ENCODE measurements at regions of chr6 and their contacts with region 1.

Region 1: DNA sequence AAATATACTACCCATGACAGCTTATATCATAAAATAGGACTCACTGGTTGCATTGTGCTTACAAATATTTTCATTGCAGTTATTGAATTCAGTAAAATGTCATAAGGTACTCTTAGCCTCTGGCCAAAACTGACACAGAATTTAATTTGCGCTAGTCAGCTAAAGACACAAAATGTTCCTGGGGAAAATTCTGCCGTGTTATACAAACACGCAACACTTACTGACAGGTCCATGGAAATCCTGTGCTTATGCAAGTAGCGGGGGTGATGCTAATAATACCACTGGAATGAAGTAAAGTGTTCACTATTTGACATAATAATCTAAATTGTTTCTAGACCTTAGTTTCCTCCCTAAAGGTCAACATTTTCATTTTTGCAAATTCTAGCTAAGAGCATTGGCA is 354.4 kb upstream of the RSPO3 start:
- DNase-seq: no peak
- H3K4me3 ChIP-seq: no peak overlapping the region
- H3K27ac ChIP-seq: no peak overlapping the region
- H3K4me1 ChIP-seq: no peaks in the 10 kb centered on the region
- H3K27me3 ChIP-seq: no peaks in the 10 kb centered on the region
- CTCF ChIP-seq: no peak
- POLR2A ChIP-seq: no peak

Region 2: DNA sequence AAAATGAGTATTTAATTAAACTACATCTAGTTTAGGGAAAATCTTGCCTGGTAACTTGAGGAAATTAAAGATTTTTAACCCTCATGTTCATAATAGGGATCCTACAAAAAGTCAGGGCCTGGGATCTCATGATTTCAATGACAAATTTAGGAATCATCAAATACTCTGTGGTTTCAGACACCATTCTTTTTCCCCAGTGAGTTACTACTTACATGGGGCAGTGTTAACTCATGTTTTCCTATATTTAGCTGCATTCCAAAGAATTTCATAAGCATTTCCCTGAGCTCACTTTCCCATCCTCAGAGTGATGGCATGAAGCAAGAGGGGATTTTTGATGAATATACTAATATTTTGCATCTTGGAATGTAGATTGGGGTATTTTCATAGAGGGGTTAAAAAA is 102.5 kb before region 1 on chr6:
- intact Hi-C with region 1: loop called (anchors 5 kb)
- DNase-seq: no peak
- H3K4me3 ChIP-seq: no peak overlapping the region
- H3K27ac ChIP-seq: no peak overlapping the region
- H3K4me1 ChIP-seq: no peaks in the 10 kb centered on the region
- H3K27me3 ChIP-seq: no peaks in the 10 kb centered on the region
- CTCF ChIP-seq: no peak
- POLR2A ChIP-seq: no peak

Region 3: DNA sequence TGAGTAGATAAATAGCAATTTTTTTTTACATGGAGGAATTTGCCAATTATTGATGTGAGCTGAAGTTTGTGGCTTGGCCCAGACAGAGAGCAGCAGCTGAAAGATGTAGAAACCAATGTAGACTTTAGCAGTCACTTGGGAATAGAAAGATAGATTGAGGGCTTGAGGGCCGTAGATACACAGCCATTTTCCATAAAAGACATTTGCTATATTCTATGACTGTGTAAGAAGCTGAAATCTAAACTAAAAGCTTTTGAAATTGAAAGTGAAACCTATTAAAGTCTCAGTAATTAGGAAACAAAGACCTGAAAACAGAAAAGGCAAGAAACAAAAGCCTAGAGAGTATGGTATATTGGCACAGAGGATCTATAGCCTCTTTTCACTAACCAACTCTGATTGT is 91.5 kb before region 1 on chr6:
- intact Hi-C with region 1: no loop called
- DNase-seq: no peak
- H3K4me3 ChIP-seq: no peak overlapping the region
- H3K27ac ChIP-seq: no peak overlapping the region
- H3K4me1 ChIP-seq: no peaks in the 10 kb centered on the region
- H3K27me3 ChIP-seq: no peaks in the 10 kb centered on the region
- CTCF ChIP-seq: no peak
- POLR2A ChIP-seq: no peak

Region 4: GRCh38 chr6:126821706-126822105 is 57.6 kb after region 1 on chr6:
- intact Hi-C with region 1: no loop called
- DNase-seq: no peak
- H3K4me3 ChIP-seq: no peak overlapping the region
- H3K27ac ChIP-seq: no peak overlapping the region
- H3K4me1 ChIP-seq: no peaks in the 10 kb centered on the region
- H3K27me3 ChIP-seq: no peaks in the 10 kb centered on the region
- CTCF ChIP-seq: no peak
- POLR2A ChIP-seq: no peak

Measured in prostate gland (tissue), 2 donors.